HEK293 (cell line): ENCODE measurements at regions of chr13 and their contacts with region 1.

Region 1: GRCh38 chr13:52450012-52450792 is at the start of gene VPS36:
- H3K4me3 ChIP-seq: peak within 1 kb of the TSS; percentile 83
- H3K27ac ChIP-seq: peak within 1 kb of the TSS; percentile 95
- H3K4me1 ChIP-seq: peaks cover 12% of the 10 kb centered on the region
- CTCF ChIP-seq: peak; percentile 90

Region 2: GRCh38 chr13:51674279-51674678 is 775.9 kb before region 1 on chr13:
- CTCF ChIA-PET with region 1: no interaction called
- POLR2A ChIA-PET with region 1: no interaction called
- H3K4me3 ChIP-seq: no peak overlapping the region
- H3K27ac ChIP-seq: no peak overlapping the region
- H3K4me1 ChIP-seq: no peaks in the 10 kb centered on the region
- CTCF ChIP-seq: no peak

Region 3: DNA sequence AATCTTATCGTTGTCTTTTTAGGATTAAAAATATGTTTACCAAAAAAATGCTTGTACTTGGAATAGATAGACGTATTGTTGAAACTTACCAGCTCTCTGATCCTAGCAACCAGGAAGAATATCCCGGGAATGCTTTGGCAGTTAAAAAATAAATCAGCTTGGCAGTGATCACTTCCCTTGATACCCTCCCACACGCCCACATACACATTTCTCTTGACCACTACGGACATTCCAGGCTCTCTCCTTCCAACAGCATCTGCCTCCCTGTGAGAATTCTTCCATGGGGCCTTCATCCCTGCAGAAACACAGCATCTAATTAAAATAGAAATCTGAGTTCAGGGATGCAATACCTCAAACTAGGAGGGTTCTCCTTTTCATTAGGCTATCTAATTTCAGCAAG is 102.1 kb before region 1 on chr13:
- CTCF ChIA-PET with region 1: interaction called, 20 read pairs
- POLR2A ChIA-PET with region 1: interaction called, 4 read pairs
- H3K4me3 ChIP-seq: no peak overlapping the region
- H3K27ac ChIP-seq: no peak overlapping the region
- H3K4me1 ChIP-seq: no peaks in the 10 kb centered on the region
- CTCF ChIP-seq: no peak

Region 4: DNA sequence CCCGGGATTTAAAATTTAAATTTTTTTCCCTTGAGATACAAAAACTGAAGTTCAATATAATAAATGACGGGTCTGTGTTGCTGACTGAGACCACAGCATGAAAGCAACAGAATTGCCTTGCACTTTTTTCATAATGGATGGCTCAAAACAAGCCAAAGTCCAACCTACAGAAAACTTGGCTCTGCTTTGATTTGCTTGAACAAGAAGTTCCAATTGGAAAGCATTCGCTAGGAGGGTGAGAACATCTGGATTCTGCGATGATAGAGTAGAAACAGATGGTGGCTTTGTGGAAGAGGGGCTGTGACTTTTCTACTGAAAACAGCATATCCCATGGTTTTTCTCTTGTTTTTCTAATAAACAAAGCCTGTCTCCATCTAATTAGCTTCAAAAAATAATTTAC is 90.7 kb before region 1 on chr13:
- CTCF ChIA-PET with region 1: interaction called, 11 read pairs
- POLR2A ChIA-PET with region 1: no interaction called
- H3K4me3 ChIP-seq: no peak overlapping the region
- H3K27ac ChIP-seq: no peak overlapping the region
- H3K4me1 ChIP-seq: no peaks in the 10 kb centered on the region; the same call in 1 of the 2 replicates
- CTCF ChIP-seq: no peak